ENCODE measurements at regions of chr11 and their contacts with region 1.

Region 1: GRCh38 chr11:33687733-33688479 is 12.7 kb downstream of the C11orf91 start:
- DNase-seq: peak; percentile 70 to 76
- ATAC-seq: no peak
- H3K4me3 ChIP-seq: no peak overlapping the region
- H3K27ac ChIP-seq: peak overlapping the region; percentile 94 to 96; a peak in 5 of 6 replicates
- H3K4me1 ChIP-seq: peaks cover 45% of the 10 kb centered on the region
- CTCF ChIP-seq: peak; percentile 92
- EP300 ChIP-seq: no peak
- POLR2A ChIP-seq: no peak
- RAD21 ChIP-seq: peak; percentile 98 to 99

Region 2: GRCh38 chr11:33161120-33162005 is 526.5 kb before region 1 on chr11 and contains the start of gene CSTF3:
- CTCF ChIA-PET with region 1: interaction called, 42 read pairs
- POLR2A ChIA-PET with region 1: interaction called, 10 read pairs
- DNase-seq: peak; percentile 92 to 99
- ATAC-seq: peak; percentile 97 to 98
- H3K4me3 ChIP-seq: peak within 1 kb of the TSS; percentile 77
- H3K27ac ChIP-seq: peak within 1 kb of the TSS; percentile 85 to 87
- H3K4me1 ChIP-seq: peaks cover 36% of the 10 kb centered on the region
- CTCF ChIP-seq: no peak
- EP300 ChIP-seq: no peak
- POLR2A ChIP-seq: peak; percentile 43
- RAD21 ChIP-seq: no peak
- polyA plus RNA-seq, gene CSTF3: 41.4 and 53.9 TPM in 2 replicates

Region 3: DNA sequence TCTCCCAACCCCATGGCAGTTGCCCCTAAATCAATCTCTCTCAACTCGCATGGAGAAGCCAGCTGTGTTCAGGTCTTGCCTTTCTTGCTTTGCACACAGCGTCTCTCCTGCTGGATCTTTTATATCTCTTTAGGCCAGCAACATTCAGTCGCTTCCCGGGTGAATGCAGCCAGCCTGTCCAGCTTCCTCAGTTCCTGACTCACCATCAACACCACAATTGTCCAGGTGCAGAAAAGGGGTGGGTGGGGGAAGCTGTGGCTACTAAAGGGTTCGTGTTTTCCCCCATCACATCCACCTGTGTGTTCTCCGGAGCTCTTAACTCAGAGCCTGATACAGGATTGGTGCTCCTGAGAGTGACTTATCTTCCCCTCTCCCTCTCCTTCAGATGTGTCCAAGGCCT is 314.3 kb before region 1 on chr11:
- CTCF ChIA-PET with region 1: interaction called, 216 read pairs
- POLR2A ChIA-PET with region 1: no interaction called
- DNase-seq: no peak
- ATAC-seq: no peak
- H3K4me3 ChIP-seq: no peak overlapping the region
- H3K27ac ChIP-seq: 0 out of 6 replicates have a peak overlapping the region, but pooled peaks of 1 of the 2 experiments have one; percentile 8
- H3K4me1 ChIP-seq: peaks cover 31% of the 10 kb centered on the region
- CTCF ChIP-seq: no peak
- EP300 ChIP-seq: no peak
- POLR2A ChIP-seq: no peak
- RAD21 ChIP-seq: no peak

Region 4: DNA sequence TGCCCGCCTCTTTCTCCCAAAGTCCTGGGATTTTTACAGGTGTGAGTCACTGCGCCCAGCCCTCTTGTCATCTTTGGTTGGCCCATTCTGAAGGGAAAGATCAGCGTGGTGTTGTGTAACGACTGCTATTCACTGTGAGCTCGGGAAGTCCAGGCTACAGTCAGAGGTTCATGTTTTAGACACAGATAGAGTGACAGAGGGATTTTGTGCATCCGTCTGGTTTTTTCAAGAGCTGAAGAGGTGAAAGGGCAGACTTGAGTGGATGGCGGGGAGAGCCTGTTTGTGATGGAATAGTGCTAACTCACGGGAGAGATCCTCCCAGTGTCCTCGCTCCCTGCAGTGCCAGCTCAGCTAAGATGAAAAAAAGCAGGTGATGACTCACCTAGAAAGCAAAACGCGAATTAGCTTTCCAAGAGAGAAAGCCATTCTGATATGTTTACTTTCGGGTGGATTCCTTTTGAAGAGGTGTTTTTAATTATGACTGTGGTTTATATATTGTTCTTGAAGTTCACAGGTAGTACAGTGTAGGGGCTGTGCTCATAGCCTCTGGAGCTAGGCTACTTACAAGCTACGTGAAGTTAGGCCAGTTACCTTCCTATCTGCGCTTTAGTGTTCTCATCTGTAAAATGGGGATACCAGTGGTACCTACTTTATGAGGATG is 54.5 kb before region 1 on chr11:
- CTCF ChIA-PET with region 1: interaction called, 40 read pairs
- POLR2A ChIA-PET with region 1: interaction called, 6 read pairs
- DNase-seq: peak; percentile 80 to 94
- ATAC-seq: peak; percentile 86 to 89
- H3K4me3 ChIP-seq: no peak overlapping the region
- H3K27ac ChIP-seq: peak overlapping the region; percentile 81 to 87
- H3K4me1 ChIP-seq: peaks cover 51% of the 10 kb centered on the region
- CTCF ChIP-seq: no peak
- EP300 ChIP-seq: peak in 1 of 2 experiments; percentile 54; a peak in 2 of 5 replicates
- POLR2A ChIP-seq: no peak
- RAD21 ChIP-seq: no peak

Region 5: DNA sequence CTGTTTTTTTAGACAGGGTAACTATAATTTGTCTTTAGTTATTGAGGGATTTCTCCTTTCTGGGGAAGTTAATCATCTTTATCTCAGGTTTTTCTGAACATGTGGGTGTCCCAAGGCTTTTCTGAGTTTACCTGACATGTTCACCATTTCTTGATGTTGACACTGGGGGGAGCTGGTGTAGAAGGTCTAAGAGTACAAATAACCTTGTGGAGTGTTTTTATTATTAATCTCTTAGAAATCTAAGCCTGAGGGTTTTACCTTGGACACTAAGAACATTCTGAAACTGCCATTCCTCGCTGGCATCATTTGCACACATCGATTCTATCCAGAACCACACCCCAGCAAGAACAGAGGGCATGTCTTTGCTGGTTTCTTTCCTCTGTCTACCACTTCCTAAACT is 28.3 kb after region 1 on chr11:
- CTCF ChIA-PET with region 1: interaction called, 10 read pairs
- POLR2A ChIA-PET with region 1: interaction called, 4 read pairs
- DNase-seq: peak in 1 of 2 experiments; percentile 62
- ATAC-seq: peak; percentile 68 to 78; a peak in 5 of 6 replicates
- H3K4me3 ChIP-seq: no peak overlapping the region
- H3K27ac ChIP-seq: peak overlapping the region; percentile 39 to 42; a peak in 3 of 6 replicates
- H3K4me1 ChIP-seq: peaks cover 47% of the 10 kb centered on the region
- CTCF ChIP-seq: peak; percentile 57
- EP300 ChIP-seq: no peak
- POLR2A ChIP-seq: no peak
- RAD21 ChIP-seq: peak; percentile 59 to 65